Right ventricle myocardium inferior (tissue), 1 donor: ENCODE measurements at regions of chr1 and their contacts with region 1.

Region 1: DNA sequence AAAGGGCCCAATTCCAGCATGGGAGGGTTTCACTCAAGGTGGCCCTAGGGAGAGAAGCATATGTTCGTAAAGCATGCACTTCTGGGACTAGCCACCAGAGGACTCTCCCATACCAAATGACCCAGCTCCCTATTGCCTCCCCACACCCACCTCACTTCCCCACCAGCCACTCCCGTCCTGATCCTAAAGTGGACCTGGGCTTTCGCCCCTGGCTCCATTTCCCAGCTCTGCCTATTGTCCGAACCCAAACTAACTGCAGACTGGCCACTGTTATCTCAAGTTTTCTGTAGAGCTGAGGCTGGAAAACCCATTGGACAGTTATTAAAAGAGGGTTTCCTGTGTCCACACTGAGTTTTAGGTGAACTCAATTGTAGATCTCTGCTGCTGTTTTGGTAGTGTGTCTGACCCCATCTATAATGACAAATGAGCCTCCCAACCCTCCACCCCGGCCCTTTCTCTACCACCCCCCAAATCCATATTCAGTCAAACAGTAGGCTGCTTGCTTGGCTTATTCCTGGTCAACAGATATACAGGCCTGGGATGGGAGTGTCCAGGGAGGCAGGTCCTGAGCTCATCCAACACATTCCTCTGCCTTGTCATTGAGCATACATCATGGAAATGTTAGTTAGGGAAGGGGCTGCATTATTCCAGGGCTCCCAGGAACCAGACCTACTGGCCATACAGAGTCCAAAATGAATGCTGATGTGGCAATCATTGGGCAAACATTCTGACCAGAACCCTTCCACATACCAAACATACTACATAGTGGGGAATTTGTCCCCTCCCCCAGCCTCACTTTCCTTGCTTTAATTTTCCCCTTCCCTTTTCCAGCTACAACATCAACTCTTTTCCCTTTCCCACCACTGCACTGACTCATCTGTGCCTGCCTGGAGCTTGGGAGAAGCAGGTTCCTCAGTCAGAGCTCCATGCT is 59.2 kb downstream of the ABCA4 start:
- DNase-seq: no peak
- ATAC-seq: peak; percentile 77

Region 2: GRCh38 chr1:94025383-94026340 is 36.1 kb before region 1 on chr1:
- intact Hi-C with region 1: loop called (anchors 2 kb)
- DNase-seq: no peak
- ATAC-seq: no peak

Region 3: DNA sequence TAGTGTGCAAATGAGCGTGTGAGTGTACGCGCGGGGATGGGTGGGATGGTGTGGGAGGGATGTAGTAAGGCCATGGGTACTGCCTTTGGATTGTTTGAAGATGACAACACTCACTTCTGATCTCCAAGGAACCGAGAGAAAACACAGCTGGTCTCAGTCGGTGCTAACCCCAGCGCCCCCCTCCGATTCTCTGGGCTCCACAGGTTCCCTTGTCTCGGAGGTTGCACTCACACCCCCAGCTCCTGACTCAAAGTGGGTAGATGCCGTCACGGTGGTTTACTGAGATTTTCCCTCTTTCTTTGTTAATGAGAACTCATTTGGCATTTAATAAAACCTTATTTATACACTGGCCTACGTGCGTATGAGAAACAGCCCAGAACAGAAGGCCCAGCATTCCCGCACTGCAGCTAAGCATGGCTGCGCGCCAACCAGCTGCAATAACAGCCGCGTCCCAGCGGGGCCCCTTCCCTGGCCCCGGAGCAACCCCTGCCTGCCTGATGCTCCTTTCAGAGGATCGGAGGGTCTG is 33.4 kb after region 1 on chr1:
- intact Hi-C with region 1: loop called (anchors 5 kb)
- DNase-seq: peak; percentile 93
- ATAC-seq: peak; percentile 86

Region 4: DNA sequence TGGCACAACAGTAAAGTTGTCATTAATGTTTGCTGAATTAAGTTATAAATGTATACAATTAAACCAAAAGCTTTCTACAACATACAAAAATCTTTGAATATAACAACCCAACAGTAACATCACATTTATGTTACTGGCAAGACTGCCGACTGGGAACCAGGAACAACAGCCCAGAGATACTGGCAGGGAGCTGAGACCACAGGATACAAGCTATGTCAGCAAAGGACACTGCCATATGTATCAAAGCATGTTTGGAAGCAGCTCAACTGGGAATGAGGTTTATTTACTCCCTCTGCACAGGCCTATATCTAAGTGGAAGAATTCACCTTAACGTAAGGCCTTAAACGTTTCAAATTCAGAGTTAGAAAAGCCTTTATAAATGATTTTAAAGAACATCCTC is 125.2 kb after region 1 on chr1:
- intact Hi-C with region 1: loop called (anchors 5 kb)
- DNase-seq: no peak
- ATAC-seq: no peak

Region 5: GRCh38 chr1:94237291-94238226 is 175.8 kb after region 1 on chr1 and contains the start of gene ARHGAP29:
- intact Hi-C with region 1: loop called (anchors 5 kb)
- DNase-seq: peak; percentile 91
- ATAC-seq: peak; percentile 96
- total RNA-seq, gene ARHGAP29: 27.5 TPM

Region 6: GRCh38 chr1:94335950-94336349 is 274.2 kb after region 1 on chr1:
- intact Hi-C with region 1: loop called (anchors 1 kb)
- DNase-seq: no peak
- ATAC-seq: peak; percentile 91

Region 7: DNA sequence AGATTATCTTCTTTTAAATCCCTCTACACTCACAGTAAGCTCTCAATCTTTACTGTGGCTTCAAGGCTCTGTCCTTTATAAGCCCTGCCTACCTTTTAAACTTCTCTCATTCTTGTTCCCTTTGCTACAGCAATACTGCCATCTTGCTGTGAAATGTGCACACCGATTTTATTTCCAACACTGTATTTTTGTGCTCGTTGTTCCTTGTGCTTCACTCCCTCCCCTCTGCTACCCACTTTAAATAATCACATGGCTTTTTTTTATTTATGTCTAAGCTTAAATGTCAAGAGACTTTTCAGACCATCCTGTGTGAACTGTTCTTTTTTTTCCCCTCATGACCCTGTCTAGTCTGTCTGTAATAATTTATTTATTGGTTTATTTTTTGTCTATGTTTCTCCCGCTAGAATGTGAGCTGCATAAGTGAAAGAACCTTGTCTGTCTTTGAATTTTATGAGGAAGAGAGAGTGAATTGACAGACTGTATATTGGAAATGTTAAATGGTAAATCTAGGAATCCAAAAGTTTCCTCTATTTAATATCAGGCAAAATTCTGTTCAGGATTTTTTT is 402.1 kb after region 1 on chr1:
- intact Hi-C with region 1: loop called (anchors 10 kb)
- DNase-seq: no peak
- ATAC-seq: peak; percentile 72